ENCODE measurements at regions of chr11 and their contacts with region 1.

Region 1: DNA sequence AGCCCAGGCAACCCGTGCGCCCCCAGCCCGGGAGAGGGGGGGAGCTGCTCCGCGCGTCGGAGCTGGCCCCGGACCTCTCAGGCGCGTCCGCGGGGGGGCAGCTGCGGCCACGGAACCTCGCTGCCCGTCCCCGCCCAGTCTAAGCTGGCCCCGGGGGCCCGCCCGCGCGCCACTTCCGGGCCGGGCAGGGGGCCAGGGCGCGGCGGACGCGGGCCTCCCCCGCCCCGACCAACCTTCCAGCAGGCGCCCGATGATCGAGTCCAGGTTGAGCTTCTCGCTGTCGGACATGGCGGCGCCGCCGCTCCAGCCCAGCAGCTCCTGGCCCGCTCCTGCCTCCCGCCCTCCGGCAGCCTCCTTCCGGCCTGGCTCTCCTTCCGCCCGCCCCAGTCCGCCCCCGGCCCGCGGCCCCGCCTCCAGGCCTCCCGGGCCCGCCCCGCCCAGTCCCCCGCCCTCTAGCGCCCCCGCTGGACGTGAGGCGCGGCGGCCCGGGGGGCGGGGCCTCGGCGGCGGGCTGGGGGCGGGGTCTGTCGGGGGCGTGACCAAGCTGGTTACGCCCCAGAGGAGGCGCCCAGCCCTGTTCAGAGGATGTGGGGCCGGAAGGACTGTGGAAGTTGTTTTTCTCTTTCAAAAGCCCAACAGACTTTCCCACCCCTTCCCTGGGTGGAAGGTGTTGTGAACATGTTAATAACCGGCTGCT is at the start of gene PPP1CA:
- DNase-seq: peak; percentile 95
- H3K4me3 ChIP-seq: peak within 1 kb of the TSS; percentile 74 to 84 (median 76)
- H3K27ac ChIP-seq: peak within 1 kb of the TSS; percentile 92 to 93 (median 92)
- H3K4me1 ChIP-seq: peaks cover 0 to 43% (median 36%) of the 10 kb centered on the region in 4 donors
- H3K27me3 ChIP-seq: peaks cover 0 to 31% (median 12%) of the 10 kb centered on the region in 3 donors
- CTCF ChIP-seq: peak in 2 of 4 experiments; percentile 11 to 48
- EP300 ChIP-seq: no peak
- POLR2A ChIP-seq: peak in 1 of 2 donors; percentile 70
- total RNA-seq, gene PPP1CA: 59.5 to 87.0 (median 80.0) TPM

Region 2: GRCh38 chr11:67317205-67317887 is 84.3 kb before region 1 on chr11:
- intact Hi-C with region 1: no loop called
- DNase-seq: peak; percentile 97
- H3K4me3 ChIP-seq: peak overlapping the region; percentile 53 to 80 (median 72)
- H3K27ac ChIP-seq: peak overlapping the region; percentile 85 to 98 (median 90)
- H3K4me1 ChIP-seq: peaks cover 0 to 34% (median 26%) of the 10 kb centered on the region in 4 donors
- H3K27me3 ChIP-seq: no peaks in the 10 kb centered on the region
- CTCF ChIP-seq: peak; percentile 94 to 100 (median 98)
- EP300 ChIP-seq: no peak
- POLR2A ChIP-seq: peak in 1 of 2 donors; percentile 83

Region 3: DNA sequence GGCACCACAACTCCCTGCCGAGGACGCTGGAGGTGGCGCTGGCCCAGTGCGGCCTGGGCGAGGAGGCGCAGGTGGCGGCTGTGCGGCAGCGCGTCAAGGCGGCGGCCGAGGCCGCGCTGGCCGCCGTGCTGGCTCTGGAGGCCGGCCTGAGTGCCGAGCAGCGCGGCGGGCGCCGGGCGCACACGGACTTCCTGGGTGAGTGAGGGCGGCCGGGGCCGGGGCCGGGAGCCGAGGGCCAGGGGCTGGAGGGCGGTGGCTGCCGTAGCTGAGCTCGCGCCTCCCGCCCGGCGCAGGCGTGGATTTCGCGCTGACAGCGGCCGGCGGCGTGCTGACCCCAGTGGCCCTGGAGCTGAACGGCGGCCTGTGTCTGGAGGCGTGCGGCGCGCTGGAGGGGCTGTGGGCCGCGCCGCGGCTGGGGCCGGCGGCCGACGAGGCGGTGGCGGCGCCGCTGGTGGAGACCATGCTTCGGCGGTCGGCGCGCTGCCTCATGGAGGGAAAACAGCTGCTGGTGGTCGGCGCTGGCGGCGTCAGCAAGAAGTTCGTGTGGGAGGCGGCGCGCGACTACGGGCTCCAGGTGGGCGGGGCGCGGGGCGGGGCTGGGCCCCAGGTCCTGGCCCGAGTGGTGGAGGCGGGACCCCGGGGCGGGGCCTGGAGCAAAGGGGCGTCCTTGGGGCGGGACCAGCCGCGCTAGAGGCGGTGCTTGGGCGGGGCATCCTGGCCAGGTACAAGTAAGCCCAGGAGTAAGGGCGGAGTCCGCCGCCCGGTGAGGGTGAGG is 19.2 kb after region 1 on chr11:
- intact Hi-C with region 1: loop called (anchors 2 kb)
- DNase-seq: peak; percentile 98
- H3K4me3 ChIP-seq: peak overlapping the region; percentile 31 to 87 (median 71)
- H3K27ac ChIP-seq: peak overlapping the region; percentile 88 to 99 (median 92)
- H3K4me1 ChIP-seq: peaks cover 0 to 38% (median 25%) of the 10 kb centered on the region in 4 donors
- H3K27me3 ChIP-seq: peaks cover 0 to under 1% (median 0%) of the 10 kb centered on the region in 3 donors
- CTCF ChIP-seq: no peak
- EP300 ChIP-seq: no peak
- POLR2A ChIP-seq: no peak

Region 4: GRCh38 chr11:67482825-67483798 is 81.5 kb after region 1 on chr11 and contains the start of gene AIP:
- intact Hi-C with region 1: loop called (anchors 5 kb)
- DNase-seq: peak; percentile 99
- H3K4me3 ChIP-seq: peak within 1 kb of the TSS; percentile 36 to 59 (median 51)
- H3K27ac ChIP-seq: peak within 1 kb of the TSS; percentile 81 to 87 (median 82)
- H3K4me1 ChIP-seq: peaks cover 0 to 37% (median 24%) of the 10 kb centered on the region in 4 donors
- H3K27me3 ChIP-seq: no peaks in the 10 kb centered on the region
- CTCF ChIP-seq: peak in 1 of 4 experiments; percentile 50
- EP300 ChIP-seq: no peak
- POLR2A ChIP-seq: peak; percentile 42 to 56
- total RNA-seq, gene AIP: 103 to 120 (median 109) TPM